ENCODE measurements at regions of chr10 and their contacts with region 1.

Region 1: GRCh38 chr10:84147347-84147746 is 8.0 kb downstream of the GHITM start:
- DNase-seq: no peak
- ATAC-seq: no peak
- H3K4me3 ChIP-seq: no peak overlapping the region
- H3K27ac ChIP-seq: no peak overlapping the region
- H3K4me1 ChIP-seq: no peaks in the 10 kb centered on the region
- H3K27me3 ChIP-seq: no peaks in the 10 kb centered on the region
- CTCF ChIP-seq: no peak
- POLR2A ChIP-seq: no peak
- RAD21 ChIP-seq: no peak

Region 2: DNA sequence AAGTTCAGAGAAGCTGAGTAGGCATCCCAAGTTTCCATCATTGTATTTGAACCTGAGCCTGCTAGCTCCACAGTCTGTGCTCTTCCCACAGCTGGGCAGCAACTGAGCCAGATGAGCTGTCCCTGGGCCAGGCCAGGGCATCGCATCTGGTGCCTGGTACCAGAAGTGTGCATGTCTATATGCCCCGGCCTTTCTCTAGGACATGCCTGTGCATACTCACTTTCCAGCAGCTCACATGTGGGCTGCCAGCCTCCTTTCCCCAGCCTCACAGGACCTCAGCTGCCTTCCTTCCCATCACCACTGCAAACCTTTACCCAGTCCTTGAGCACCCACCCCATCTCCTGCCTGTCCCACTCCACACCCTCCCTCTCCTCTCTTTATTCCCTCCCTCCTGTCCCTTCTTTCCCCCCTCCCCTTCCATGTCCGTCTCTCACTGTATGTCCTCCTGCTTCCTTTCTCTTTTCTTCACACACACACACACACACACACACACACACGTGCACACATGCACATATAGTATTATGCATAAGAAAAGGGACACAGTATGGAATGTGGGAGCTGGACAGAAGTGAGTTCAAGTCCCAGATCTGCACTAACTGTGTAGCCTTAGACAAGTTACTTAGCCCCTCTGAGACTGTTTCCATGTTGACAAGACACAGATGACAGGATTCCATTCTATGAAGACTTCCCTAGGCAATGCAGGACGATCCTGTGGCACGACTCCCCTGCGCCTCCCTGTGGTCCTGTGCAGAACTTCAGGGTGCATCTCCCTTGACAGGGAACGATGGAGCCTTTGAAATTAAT is 57.9 kb after region 1 on chr10:
- CTCF ChIA-PET with region 1: no interaction called
- POLR2A ChIA-PET with region 1: no interaction called
- dilution Hi-C with region 1: no loop called
- in situ Hi-C with region 1: no loop called
- intact Hi-C with region 1: loop called (anchors 5 kb)
- DNase-seq: peak; percentile 18
- ATAC-seq: peak; percentile 92
- H3K4me3 ChIP-seq: no peak overlapping the region
- H3K27ac ChIP-seq: no peak overlapping the region
- H3K4me1 ChIP-seq: no peaks in the 10 kb centered on the region
- H3K27me3 ChIP-seq: peaks cover 5% of the 10 kb centered on the region
- CTCF ChIP-seq: peak; percentile 55
- POLR2A ChIP-seq: no peak
- RAD21 ChIP-seq: peak; percentile 55

Region 3: DNA sequence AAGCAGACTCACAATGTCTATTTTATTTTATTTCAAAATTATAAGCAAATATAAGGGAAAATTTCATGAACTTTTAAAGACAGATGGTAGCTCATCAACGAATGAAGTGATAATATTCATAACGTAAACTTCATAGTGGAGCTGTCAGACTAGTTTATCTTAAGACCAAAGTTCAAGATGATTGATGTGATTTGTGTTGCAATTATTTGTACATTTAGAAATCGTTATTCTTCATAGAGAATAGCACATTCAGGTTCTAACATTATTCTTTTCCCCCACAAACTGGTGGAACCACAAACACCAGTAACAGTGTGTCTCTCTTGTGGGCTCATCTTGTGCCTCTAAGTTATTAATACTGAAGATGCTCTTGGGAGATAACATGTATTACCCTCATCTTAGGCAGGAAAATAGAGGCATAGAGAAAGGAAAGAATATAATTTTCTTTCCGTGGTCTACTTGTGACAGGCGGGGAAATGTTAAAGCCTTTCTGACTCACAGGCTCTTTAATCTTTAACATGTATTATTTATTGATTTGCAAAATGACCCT is 218.1 kb after region 1 on chr10:
- CTCF ChIA-PET with region 1: no interaction called
- POLR2A ChIA-PET with region 1: no interaction called
- dilution Hi-C with region 1: no loop called
- in situ Hi-C with region 1: no loop called
- intact Hi-C with region 1: no loop called
- DNase-seq: no peak
- ATAC-seq: no peak
- H3K4me3 ChIP-seq: no peak overlapping the region
- H3K27ac ChIP-seq: no peak overlapping the region
- H3K4me1 ChIP-seq: peaks cover 5% of the 10 kb centered on the region; the same call in 1 of the 2 replicates
- H3K27me3 ChIP-seq: no peaks in the 10 kb centered on the region
- CTCF ChIP-seq: no peak
- POLR2A ChIP-seq: no peak
- RAD21 ChIP-seq: no peak